Caco-2 (cell line): ENCODE measurements at regions of chr6 and their contacts with region 1.

Region 1: GRCh38 chr6:151306269-151306783 is 66.6 kb downstream of the AKAP12 start:
- DNase-seq: no peak
- H3K4me3 ChIP-seq: no peak overlapping the region
- H3K4me3 Mint-ChIP-seq: no peak overlapping the region
- H3K27ac Mint-ChIP-seq: no peak overlapping the region
- H3K4me1 ChIP-seq: peaks cover 19% of the 10 kb centered on the region
- H3K4me1 Mint-ChIP-seq: peaks cover 9% of the 10 kb centered on the region
- H3K27me3 ChIP-seq: no peaks in the 10 kb centered on the region; the same call in 1 of the 2 replicates
- H3K27me3 Mint-ChIP-seq: peaks cover 4% of the 10 kb centered on the region
- CTCF ChIP-seq: no peak

Region 2: DNA sequence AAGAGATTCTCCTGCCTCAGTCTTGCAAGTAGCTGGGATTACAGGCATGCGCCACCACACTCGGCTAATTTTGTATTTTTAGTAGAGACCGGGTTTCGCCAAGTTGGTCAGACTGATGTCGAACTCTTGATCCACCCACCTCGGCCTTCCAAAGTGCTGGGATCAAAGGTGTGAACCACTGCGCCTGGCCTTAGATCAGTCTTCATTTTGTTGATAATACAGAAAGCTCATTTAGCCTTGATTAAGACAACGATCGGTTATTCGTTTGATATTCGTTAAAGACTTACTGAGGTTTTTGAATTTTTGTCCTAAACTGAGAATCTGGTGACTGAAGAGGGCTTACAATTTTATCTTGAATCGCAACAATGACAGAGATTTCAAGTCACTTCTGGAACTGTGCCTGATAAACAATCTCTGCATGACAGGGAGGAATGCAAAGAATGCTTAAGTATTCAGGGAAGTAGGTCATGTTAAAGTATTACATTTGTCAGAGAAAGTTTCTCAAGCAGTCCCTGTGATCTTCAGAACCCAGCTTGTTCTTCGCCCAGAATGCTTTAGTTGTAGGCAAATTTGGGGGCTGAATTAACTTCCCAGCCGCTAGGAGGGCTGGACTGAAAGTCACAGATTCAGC is 51.8 kb before region 1 on chr6:
- CTCF ChIA-PET with region 1: no interaction called
- POLR2A ChIA-PET with region 1: no interaction called
- intact Hi-C with region 1: loop called (anchors 2 kb)
- DNase-seq: peak in 1 of 2 experiments; percentile 39
- H3K4me3 ChIP-seq: no peak overlapping the region
- H3K4me3 Mint-ChIP-seq: peak overlapping the region; percentile 55
- H3K27ac Mint-ChIP-seq: peak overlapping the region; percentile 91
- H3K4me1 ChIP-seq: peaks cover 23% of the 10 kb centered on the region
- H3K4me1 Mint-ChIP-seq: peaks cover 7% of the 10 kb centered on the region
- H3K27me3 ChIP-seq: no peaks in the 10 kb centered on the region
- H3K27me3 Mint-ChIP-seq: no peaks in the 10 kb centered on the region
- CTCF ChIP-seq: no peak

Region 3: GRCh38 chr6:151290877-151291721 is 15.2 kb before region 1 on chr6:
- CTCF ChIA-PET with region 1: no interaction called
- POLR2A ChIA-PET with region 1: no interaction called
- intact Hi-C with region 1: no loop called
- DNase-seq: no peak
- H3K4me3 ChIP-seq: no peak overlapping the region
- H3K4me3 Mint-ChIP-seq: no peak overlapping the region
- H3K27ac Mint-ChIP-seq: no peak overlapping the region
- H3K4me1 ChIP-seq: no peaks in the 10 kb centered on the region
- H3K4me1 Mint-ChIP-seq: no peaks in the 10 kb centered on the region
- H3K27me3 ChIP-seq: no peaks in the 10 kb centered on the region
- H3K27me3 Mint-ChIP-seq: peaks cover 8% of the 10 kb centered on the region
- CTCF ChIP-seq: no peak